ENCODE measurements at regions of chr10 and their contacts with region 1.

Region 1: DNA sequence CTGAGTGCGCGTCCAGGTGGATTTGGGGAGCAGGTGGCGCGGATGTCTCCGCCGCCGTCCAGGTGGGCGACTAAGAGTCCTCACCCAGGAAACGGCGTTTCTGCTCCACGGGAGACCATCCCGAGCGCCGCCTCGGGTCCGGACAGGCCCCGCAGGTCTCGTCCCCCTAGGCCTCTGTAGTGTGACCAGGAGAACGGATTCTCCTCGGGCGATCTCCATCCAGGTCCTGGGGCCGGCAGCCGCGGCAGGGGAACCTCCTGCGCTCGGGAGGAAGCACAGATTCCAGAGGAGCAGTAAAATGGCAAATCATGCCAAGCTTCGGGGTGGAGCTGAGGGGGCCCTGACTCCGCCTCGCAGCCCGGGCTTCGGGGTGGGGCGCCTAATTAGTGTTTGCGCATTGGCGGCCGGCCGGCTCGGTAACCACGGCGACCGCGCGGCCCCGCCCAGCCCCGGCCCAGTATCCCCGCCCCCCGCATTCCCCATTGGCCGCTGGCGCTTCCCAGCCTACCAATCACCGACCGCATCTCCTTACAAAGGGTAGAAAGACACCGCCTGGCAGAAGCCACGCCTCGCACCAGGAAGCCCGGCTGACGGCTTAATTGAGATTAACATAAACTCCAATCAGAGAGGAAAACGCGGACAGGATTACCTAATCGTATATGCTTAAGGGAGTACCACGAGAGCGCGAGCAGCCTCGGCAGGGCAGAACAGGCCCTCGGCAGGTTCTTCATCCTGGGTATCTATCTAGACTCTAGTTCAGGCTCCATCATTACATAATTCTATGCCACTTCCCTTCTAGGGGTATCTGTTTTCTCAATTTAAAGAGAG is 168.6 kb downstream of the ARHGAP12 start:
- DNase-seq: peak; percentile 91 to 97
- ATAC-seq: peak; percentile 94 to 98 (median 95)
- H3K4me3 ChIP-seq: peak overlapping the region; percentile 95
- H3K4me3 Mint-ChIP-seq: peak overlapping the region; percentile 86
- H3K27ac ChIP-seq: peak overlapping the region; percentile 95
- H3K27ac Mint-ChIP-seq: peak overlapping the region; percentile 93 to 94
- H3K4me1 ChIP-seq: peaks cover 14% of the 10 kb centered on the region
- H3K4me1 Mint-ChIP-seq: peaks cover 13 to 14% of the 10 kb centered on the region in 2 donors
- H3K27me3 ChIP-seq: no peaks in the 10 kb centered on the region
- H3K27me3 Mint-ChIP-seq: no peaks in the 10 kb centered on the region
- CTCF ChIP-seq: no peak

Region 2: GRCh38 chr10:30701451-30702173 is 1058.4 kb before region 1 on chr10:
- intact Hi-C with region 1: loop called (anchors 1 kb)
- DNase-seq: peak; percentile 50 to 87
- ATAC-seq: peak; percentile 82 to 87 (median 87)
- H3K4me3 ChIP-seq: peak overlapping the region; percentile 33
- H3K4me3 Mint-ChIP-seq: peak overlapping the region; percentile 80
- H3K27ac ChIP-seq: peak overlapping the region; percentile 92
- H3K27ac Mint-ChIP-seq: peak overlapping the region; percentile 90 to 92
- H3K4me1 ChIP-seq: peaks cover 54% of the 10 kb centered on the region
- H3K4me1 Mint-ChIP-seq: peaks cover 39 to 52% of the 10 kb centered on the region in 2 donors
- H3K27me3 ChIP-seq: no peaks in the 10 kb centered on the region
- H3K27me3 Mint-ChIP-seq: no peaks in the 10 kb centered on the region
- CTCF ChIP-seq: no peak

Region 3: DNA sequence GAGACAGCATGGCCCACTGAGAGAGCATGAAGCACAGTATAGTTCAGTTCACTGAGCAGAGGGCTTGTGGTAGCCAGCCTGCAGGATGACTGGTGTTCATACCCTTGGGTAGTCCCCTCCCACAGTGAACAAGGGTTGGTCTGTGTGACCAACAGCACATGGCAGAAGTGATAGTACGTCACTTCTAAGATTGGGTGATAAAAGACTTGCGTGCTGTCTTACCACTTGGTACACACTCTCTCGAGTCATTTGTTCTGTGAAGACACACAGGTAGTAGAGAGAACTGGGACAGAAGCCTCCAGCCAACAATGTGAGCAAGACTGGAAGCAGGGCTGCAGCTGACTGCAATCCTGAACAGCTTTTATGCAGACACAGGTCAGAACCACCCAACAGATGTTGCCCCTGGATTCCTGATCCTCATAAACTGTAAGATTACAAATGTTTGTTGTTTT is 572.3 kb after region 1 on chr10:
- intact Hi-C with region 1: no loop called
- DNase-seq: peak; percentile 67 to 90
- ATAC-seq: peak; percentile 95 to 98 (median 96)
- H3K4me3 ChIP-seq: no peak overlapping the region
- H3K4me3 Mint-ChIP-seq: peak overlapping the region; percentile 62
- H3K27ac ChIP-seq: peak overlapping the region; percentile 75
- H3K27ac Mint-ChIP-seq: peak overlapping the region; percentile 67 to 93
- H3K4me1 ChIP-seq: peaks cover 40% of the 10 kb centered on the region
- H3K4me1 Mint-ChIP-seq: peaks cover 82 to 95% of the 10 kb centered on the region in 2 donors
- H3K27me3 ChIP-seq: no peaks in the 10 kb centered on the region
- H3K27me3 Mint-ChIP-seq: no peaks in the 10 kb centered on the region
- CTCF ChIP-seq: no peak

Measured in natural killer cell (primary cell).